ENCODE measurements at regions of chr10 and their contacts with region 1.

Region 1: GRCh38 chr10:62816331-62817120 is at the start of gene EGR2:
- DNase-seq: peak; percentile 98
- ATAC-seq: peak; percentile 90
- total RNA-seq, gene EGR2: 1.0 TPM

Region 2: GRCh38 chr10:62437696-62438095 is 378.8 kb before region 1 on chr10:
- intact Hi-C with region 1: loop called (anchors 1 kb)
- DNase-seq: no peak
- ATAC-seq: no peak

Region 3: GRCh38 chr10:62610649-62611229 is 205.8 kb before region 1 on chr10:
- intact Hi-C with region 1: loop called (anchors 1 kb)
- DNase-seq: peak; percentile 84
- ATAC-seq: peak; percentile 56

Region 4: DNA sequence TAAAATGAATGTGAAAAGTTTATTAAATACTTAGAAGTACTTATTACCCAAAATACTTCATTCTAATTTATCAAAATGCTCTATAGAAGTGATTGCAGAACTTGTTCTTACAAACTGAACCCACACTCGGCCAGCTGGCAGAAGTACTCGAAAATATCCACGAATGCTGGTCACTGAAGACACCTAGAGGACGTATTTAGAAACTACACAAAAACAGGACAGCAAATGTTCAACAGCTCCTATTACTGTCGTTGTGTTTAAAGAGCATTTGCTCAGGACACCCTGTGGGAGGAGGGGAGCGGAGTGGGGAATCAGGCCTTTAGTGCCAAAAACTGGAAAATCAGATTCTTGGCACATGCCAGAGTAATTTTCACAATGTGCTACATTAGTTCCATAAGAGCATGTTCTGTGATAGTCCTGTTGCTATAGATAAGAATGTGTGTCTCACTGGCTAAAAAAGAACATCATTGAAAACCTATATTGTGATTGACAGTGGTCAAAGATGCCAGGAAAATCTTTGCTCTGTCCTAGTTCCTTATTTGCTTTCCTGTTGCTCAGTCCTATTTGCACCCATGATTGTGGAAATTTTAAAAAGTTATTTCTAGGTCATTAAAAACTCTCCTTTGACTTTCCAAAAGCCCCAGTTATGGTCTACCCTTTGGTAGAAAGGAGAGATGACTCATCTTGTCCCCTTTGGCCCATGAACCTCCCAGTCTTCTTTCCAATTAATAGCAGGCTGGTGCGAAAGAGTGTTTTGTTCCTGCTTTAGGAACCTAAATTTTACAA is 267.6 kb after region 1 on chr10:
- intact Hi-C with region 1: loop called (anchors 2 kb)
- DNase-seq: peak; percentile 74
- ATAC-seq: peak; percentile 91

Region 5: DNA sequence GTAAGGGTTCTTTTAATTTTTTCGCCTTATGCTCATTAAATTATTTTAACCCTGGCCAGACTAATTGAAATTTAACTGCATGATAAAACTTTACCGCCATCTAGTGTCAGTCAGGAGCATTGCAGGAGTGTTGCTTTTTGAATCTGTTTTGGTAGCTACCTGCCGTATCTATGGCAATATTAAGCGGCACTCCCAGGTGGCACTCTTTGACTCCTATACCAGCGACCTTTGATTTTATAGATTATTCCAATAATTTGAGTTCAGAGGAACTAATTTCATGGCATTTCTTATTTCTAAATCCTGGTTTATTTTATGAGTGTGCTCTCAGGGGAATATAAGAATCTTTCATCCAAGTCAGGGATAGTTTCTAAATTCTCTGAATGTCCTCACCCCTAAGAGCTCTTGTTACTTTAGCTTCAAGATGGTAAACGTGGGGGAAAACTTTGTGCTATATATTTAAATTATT is 903.6 kb after region 1 on chr10:
- intact Hi-C with region 1: loop called (anchors 10 kb)
- DNase-seq: no peak
- ATAC-seq: peak; percentile 44

Measured in Right ventricle myocardium inferior (tissue), 1 donor.